ENCODE measurements at regions of chr19 and their contacts with region 1.

Region 1: DNA sequence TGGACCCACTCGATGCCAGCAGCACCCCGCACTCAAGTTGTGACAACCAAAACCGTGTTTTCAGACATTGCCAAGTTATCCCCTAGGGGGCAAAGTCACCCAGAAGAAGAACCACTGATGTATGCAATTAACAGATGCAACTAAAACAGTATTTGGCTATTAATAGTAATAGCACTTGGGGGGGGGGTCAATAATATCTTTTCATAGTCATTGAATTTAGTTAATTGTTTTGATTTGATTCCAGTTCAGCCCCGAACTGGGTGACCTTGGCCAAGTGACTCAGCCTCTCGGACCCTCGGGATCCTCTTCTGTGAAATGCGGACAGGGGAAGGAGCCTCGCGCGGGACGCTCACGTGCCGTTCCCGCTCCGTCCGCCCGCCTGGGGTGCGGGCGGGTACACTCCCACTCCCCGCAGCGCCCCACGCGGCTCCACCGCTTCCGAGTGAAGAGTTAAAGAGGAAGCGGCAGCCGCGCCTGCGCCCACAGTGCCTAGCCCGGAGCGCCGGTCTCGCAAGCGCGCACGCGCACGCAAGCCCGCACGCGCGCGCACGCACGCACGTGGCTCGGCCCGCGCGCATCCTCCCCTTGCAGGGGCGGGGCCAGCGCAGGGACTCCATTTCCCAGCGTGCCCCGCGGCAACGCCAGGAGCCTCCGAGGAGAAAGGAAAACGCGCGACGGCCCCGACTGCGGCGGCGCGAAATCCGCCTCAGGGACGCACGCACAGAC is 449 bp upstream of the DAZAP1 start:
- DNase-seq: peak; percentile 100
- ATAC-seq: peak; percentile 82
- H3K4me3 Mint-ChIP-seq: peak overlapping the region; percentile 78
- H3K27ac Mint-ChIP-seq: peak overlapping the region; percentile 84
- H3K4me1 Mint-ChIP-seq: peaks cover 46% of the 10 kb centered on the region
- H3K27me3 Mint-ChIP-seq: peaks cover 6% of the 10 kb centered on the region
- CTCF ChIP-seq: no peak

Region 2: GRCh38 chr19:680287-681028 is 726.5 kb before region 1 on chr19:
- CTCF ChIA-PET with region 1: no interaction called
- POLR2A ChIA-PET with region 1: no interaction called
- intact Hi-C with region 1: loop called (anchors 10 kb)
- DNase-seq: peak; percentile 95
- ATAC-seq: peak; percentile 80
- H3K4me3 Mint-ChIP-seq: peak overlapping the region; percentile 95
- H3K27ac Mint-ChIP-seq: peak overlapping the region; percentile 98
- H3K4me1 Mint-ChIP-seq: peaks cover 14% of the 10 kb centered on the region
- H3K27me3 Mint-ChIP-seq: peaks cover 4% of the 10 kb centered on the region
- CTCF ChIP-seq: no peak

Region 3: DNA sequence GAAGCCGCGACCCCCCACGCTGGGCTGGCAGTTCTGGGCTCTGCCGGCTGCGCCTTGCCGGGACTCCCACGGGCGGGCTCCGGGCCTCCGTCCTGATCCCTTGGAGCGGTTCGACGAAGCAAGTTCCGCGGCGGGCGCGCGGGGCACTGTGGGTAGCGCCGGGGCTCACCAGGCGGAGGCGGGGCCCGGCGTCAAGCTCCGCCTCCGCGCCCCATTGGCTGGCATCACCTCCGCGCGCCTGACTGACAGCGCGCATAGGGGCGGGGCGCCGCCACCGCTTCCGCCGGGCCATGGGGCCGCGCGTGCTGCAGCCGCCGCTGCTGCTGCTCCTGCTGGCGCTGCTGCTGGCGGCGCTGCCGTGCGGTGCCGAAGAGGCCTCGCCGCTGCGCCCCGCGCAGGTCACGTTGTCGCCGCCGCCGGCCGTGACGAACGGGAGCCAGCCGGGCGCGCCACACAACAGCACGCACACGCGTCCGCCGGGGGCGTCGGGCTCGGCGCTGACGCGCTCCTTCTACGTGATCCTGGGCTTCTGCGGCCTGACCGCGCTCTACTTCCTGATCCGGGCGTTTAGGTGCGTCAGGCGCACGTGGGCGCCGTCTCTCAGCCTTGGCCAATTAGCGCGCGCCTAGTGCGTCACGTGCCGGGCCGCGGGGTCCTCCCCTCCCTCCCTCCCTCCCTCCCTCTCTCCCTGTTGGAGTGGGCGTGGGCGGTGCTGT is 131.5 kb before region 1 on chr19 and contains the start of gene FAM174C:
- CTCF ChIA-PET with region 1: interaction called, 3 read pairs
- POLR2A ChIA-PET with region 1: interaction called, 4 read pairs
- intact Hi-C with region 1: loop called (anchors 2 kb)
- DNase-seq: peak; percentile 87
- ATAC-seq: peak; percentile 83
- H3K4me3 Mint-ChIP-seq: peak within 1 kb of the TSS; percentile 84
- H3K27ac Mint-ChIP-seq: peak within 1 kb of the TSS; percentile 88
- H3K4me1 Mint-ChIP-seq: peaks cover 51% of the 10 kb centered on the region
- H3K27me3 Mint-ChIP-seq: no peaks in the 10 kb centered on the region
- CTCF ChIP-seq: no peak
- total RNA-seq, gene FAM174C: 47.9 and 52.0 TPM in 2 replicates

Region 4: DNA sequence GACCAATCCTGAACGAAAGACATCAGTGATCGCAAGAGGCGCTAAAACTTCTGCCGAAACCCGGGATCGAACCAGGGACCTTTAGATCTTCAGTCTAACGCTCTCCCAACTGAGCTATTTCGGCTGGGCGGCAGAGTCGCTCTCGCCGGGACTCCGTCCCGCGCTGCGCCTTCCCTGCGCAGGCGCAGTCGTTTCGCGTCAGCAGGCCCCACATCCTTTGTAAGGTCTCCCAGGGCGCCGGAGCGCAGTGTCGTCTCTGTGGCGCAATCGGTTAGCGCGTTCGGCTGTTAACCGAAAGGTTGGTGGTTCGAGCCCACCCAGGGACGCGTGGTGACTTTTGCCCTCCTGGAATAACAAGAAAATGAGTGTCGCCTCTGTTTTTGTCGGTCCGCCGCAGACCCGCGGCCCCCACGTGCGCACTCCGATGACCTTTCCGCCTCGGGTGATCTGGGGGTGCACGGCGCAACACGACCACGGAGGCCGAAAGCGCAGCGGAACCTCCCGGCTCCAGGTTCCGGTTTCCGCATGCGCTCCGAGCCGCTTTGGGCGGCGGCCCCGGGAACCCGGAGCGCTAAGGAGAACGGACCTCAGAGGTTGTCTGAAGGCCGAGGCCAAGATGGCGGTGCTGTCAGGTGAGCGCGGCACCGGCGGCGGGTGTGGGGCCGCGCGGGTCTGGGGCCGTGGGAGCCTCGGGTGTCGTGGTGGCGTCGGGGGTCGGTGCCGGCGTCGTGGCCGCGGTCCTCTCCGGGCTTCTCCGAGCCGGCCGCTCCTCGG is 23.4 kb before region 1 on chr19 and contains the start of gene NDUFS7:
- CTCF ChIA-PET with region 1: no interaction called
- POLR2A ChIA-PET with region 1: interaction called, 4 read pairs
- intact Hi-C with region 1: loop called (anchors 1 kb)
- DNase-seq: peak; percentile 98
- ATAC-seq: peak; percentile 86
- H3K4me3 Mint-ChIP-seq: peak within 1 kb of the TSS; percentile 93
- H3K27ac Mint-ChIP-seq: peak within 1 kb of the TSS; percentile 99
- H3K4me1 Mint-ChIP-seq: peaks cover 23% of the 10 kb centered on the region
- H3K27me3 Mint-ChIP-seq: peaks cover 3% of the 10 kb centered on the region
- CTCF ChIP-seq: no peak
- total RNA-seq, gene NDUFS7: 82.1 and 84.3 TPM in 2 replicates

Region 5: DNA sequence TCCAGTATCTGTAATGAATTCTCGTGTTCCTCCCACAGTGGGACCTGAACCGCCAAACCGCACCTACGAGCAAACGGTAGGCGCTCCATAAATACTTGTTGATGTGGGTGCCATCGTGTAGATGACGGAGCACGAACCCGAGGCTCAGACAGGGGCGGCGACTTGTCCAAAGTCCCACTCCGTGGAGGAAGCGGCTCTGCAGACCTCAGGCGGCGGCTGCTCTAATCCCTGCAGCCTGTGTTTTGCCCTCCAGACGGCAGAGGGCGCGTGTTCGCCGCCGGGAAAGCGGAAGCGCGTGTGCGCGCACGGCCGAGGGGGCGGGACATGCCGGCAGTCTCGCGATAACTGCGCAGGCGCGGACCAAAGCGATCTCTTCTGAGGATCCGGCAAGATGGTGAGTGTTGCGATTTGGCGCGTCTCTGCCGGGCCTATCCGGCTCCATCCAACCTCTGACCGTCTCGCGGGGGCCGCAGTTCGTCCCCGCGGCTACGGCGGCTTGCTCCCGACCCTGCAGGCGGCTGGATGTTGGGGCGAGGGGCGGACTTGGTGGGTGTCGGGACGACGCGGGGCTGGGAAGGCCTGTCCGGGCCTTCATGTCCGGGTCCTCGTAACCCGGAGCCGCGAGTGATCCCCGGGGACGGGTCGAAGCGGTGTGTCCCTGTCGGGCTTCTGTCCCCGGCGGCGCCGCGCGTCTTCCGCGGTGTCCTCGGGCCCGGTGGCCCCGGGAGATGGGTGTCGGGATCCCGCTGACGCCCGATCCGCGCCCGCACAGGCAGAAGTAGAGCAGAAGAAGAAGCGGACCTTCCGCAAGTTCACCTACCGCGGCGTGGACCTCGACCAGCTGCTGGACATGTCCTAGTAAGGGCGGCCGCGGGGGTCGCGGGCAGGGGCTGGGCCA is 31.3 kb after region 1 on chr19 and contains the start of gene RPS15:
- CTCF ChIA-PET with region 1: no interaction called
- POLR2A ChIA-PET with region 1: interaction called, 17 read pairs
- intact Hi-C with region 1: loop called (anchors 1 kb)
- DNase-seq: peak; percentile 94
- ATAC-seq: peak; percentile 92
- H3K4me3 Mint-ChIP-seq: peak within 1 kb of the TSS; percentile 99
- H3K27ac Mint-ChIP-seq: peak within 1 kb of the TSS; percentile 99
- H3K4me1 Mint-ChIP-seq: peaks cover 26% of the 10 kb centered on the region
- H3K27me3 Mint-ChIP-seq: no peaks in the 10 kb centered on the region
- CTCF ChIP-seq: no peak
- total RNA-seq, gene RPS15: 1,788 and 2,029 TPM in 2 replicates

Region 6: DNA sequence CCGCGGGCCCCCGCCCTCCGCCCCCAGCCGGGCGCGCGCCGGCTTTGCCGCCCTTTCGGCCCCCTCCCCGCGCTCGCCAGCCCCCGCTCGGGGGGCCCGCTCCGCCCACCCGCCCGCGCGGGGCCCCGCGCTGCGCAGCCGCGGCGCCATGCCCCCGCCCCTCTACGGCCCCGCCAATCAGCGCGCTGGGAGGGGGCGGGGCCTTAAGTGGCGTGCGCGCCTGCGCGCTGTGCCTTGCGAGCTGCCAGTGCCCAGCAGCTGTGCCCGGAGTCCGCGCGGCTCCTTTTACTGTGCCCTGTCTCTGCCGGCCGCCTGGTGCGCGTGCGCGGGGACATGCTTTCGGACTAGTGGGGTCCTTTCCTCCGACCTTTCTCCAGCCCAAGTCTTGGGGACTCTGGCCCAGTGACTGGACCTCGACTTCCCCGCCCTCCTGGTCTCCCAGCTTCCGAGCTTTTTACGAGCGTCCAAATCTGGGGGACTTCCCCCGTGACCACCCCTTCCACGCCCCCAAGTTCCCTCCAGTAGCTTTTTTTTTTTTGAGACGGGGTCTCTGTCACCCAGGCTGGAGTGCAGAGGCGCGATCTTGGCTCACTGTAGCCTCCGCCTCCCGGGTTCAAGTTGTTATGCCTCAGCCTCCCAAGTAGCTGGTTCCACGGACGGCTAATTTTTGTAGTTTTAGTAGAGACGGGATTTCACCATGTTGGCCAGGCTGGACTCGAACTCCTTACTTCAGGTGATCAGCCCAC is 186.0 kb after region 1 on chr19 and contains the start of gene MBD3:
- CTCF ChIA-PET with region 1: no interaction called
- POLR2A ChIA-PET with region 1: no interaction called
- intact Hi-C with region 1: loop called (anchors 5 kb)
- DNase-seq: peak; percentile 89
- ATAC-seq: peak; percentile 84
- H3K4me3 Mint-ChIP-seq: peak within 1 kb of the TSS; percentile 90
- H3K27ac Mint-ChIP-seq: peak within 1 kb of the TSS; percentile 89
- H3K4me1 Mint-ChIP-seq: peaks cover 33% of the 10 kb centered on the region
- H3K27me3 Mint-ChIP-seq: no peaks in the 10 kb centered on the region
- CTCF ChIP-seq: no peak
- total RNA-seq, gene MBD3: 91.9 and 96.9 TPM in 2 replicates

Region 7: DNA sequence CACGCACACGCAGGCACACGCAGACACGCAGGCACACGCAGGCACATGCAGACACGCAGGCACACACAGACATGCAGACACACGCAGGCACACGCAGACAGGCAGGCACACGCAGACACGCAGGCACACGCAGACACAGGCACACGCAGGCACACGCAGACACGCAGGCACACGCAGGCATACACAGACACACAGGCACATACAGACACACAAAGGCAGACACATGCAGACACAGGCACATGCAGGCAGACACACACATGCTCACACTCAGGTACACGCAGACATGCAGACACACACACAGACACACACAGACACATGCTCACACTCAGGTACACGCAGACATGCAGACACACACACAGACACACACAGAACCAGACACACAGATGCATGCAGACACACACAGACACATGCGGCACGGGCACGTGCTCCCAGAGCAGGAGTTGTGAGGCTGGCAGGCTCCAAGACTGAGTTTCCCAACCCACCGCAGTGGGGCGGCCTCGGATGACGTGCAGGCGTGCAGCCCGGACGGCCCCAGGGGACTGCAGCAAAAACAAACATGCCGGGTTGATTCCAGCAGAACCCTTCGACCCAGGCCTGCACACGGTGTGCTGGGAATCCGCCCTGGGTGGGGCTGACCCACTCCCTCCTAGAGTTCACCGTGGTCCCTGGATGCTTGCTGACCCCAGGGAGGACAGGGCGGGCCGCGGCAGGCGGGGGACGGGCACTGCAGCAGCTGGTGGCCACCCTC is 1169.0 kb after region 1 on chr19:
- CTCF ChIA-PET with region 1: no interaction called
- POLR2A ChIA-PET with region 1: no interaction called
- intact Hi-C with region 1: no loop called
- DNase-seq: no peak
- ATAC-seq: no peak
- H3K4me3 Mint-ChIP-seq: no peak overlapping the region
- H3K27ac Mint-ChIP-seq: no peak overlapping the region
- H3K4me1 Mint-ChIP-seq: peaks cover 12% of the 10 kb centered on the region
- H3K27me3 Mint-ChIP-seq: no peaks in the 10 kb centered on the region
- CTCF ChIP-seq: no peak

Region 8: DNA sequence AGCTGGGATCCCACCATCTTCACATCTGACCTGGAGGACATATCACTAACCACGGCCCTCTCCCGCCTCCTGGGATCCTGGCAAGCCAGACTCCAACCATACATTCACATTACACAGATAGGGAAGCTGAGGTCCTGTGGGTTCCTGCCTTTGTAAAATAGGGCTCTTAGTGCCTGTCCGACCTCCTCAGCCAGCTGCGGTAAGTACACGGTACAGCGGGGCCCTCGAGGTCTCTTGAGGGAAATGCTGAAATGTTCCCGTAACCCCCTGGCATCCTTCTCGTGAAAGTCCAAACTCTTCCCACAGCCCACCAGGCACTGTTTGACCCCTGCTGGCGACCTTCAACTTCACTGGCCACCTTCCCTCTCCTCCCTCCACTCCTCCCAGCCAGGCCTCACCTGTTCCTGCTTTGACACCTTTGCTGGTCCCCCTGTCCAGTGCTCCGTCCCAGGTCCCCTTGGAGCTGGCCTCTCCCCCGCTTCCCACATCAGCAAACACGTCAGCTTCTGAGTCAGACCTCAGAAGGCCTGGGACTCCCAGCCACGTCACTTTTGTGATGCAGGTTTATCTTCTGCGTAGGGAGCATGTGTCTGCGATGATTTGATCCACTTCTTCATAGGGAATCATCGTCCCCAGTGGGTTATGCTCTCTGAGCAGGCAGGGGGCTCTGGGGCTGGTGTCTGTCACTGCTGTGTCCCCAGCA is 1304.4 kb after region 1 on chr19:
- CTCF ChIA-PET with region 1: no interaction called
- POLR2A ChIA-PET with region 1: interaction called, 12 read pairs
- intact Hi-C with region 1: no loop called
- DNase-seq: no peak
- ATAC-seq: peak; percentile 5
- H3K4me3 Mint-ChIP-seq: peak overlapping the region; percentile 66
- H3K27ac Mint-ChIP-seq: peak overlapping the region; percentile 87
- H3K4me1 Mint-ChIP-seq: peaks cover 39% of the 10 kb centered on the region
- H3K27me3 Mint-ChIP-seq: no peaks in the 10 kb centered on the region
- CTCF ChIP-seq: no peak

Measured in activated B cell treated with CpG ODN at 0.5 μM for 24 hours (primary cell).